Gastrocnemius medialis (tissue), 4 donors: ENCODE measurements at regions of chr17 and their contacts with region 1.

Region 1: GRCh38 chr17:39153599-39154051 is 2.2 kb upstream of the PLXDC1 start:
- DNase-seq: peak; percentile 81 to 87
- ATAC-seq: peak; percentile 83 to 85
- H3K4me3 ChIP-seq: peak overlapping the region; percentile 61 to 89 (median 86)
- H3K27ac ChIP-seq: peak overlapping the region; percentile 84 to 96 (median 92)
- H3K4me1 ChIP-seq: peaks cover 11 to 13% of the 10 kb centered on the region in 2 donors
- H3K27me3 ChIP-seq: peaks cover 5 to 18% (median 7%) of the 10 kb centered on the region in 3 donors
- CTCF ChIP-seq: peak in 2 of 5 experiments; percentile 25 to 32
- POLR2A ChIP-seq: peak; percentile 39 to 41

Region 2: DNA sequence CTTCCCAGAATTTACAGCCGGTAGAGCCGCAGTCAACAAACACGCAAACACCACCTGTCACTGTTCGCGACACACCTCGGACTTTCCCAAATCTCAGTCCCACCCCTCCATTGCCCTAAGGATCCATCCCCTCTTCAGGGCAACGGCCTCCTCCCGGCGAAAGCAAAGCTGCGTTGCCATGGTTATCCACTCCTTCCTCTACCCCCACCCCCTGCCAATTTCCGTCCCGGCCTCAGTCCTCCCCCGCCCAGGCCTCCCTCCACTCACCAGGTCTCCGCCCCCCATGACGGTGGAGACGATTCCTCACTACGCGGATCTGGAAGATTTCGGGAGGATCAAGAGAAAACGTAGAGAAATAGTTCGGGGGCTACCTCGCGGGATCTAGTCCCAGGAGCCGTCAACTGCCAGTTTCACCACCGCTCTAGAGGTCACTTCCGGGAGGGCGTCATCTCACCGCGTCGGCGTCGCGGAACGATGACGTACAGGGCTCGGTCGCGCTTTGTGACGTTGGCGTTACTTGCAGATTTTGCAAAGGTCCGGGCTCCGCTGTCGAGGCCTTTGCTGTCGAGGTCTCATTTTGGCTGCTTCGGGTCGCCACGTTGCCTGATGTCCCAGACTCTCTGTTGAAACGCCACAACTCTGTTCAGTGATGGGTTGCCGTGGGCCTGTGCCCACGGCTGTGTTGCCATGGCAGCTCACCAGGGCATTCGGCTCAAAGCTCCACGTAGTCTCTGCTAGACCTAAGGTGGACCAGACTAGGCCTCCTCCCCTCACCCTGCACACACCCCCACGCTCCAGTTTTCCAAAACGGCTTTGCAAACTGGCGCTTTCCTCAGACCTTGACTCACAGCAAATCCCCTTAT is 328.5 kb before region 1 on chr17 and contains the start of gene CWC25:
- in situ Hi-C with region 1: no loop called
- intact Hi-C with region 1: loop called (anchors 1 kb)
- DNase-seq: peak; percentile 79 to 96
- ATAC-seq: peak; percentile 96 to 97
- H3K4me3 ChIP-seq: peak within 1 kb of the TSS; percentile 69 to 100 (median 90)
- H3K27ac ChIP-seq: peak within 1 kb of the TSS; percentile 96 to 99 (median 98)
- H3K4me1 ChIP-seq: peaks cover 18 to 21% of the 10 kb centered on the region in 2 donors
- H3K27me3 ChIP-seq: no peaks in the 10 kb centered on the region
- CTCF ChIP-seq: no peak
- POLR2A ChIP-seq: peak; percentile 71 to 85
- total RNA-seq, gene CWC25: 9.1 to 14.4 (median 12.3) TPM

Region 3: GRCh38 chr17:39069114-39069756 is 84.4 kb before region 1 on chr17:
- in situ Hi-C with region 1: loop called in 1 of 4 experiments (anchors 10 kb)
- intact Hi-C with region 1: loop called (anchors 1 kb)
- DNase-seq: no peak
- ATAC-seq: peak in 1 of 2 donors; percentile 24
- H3K4me3 ChIP-seq: no peak overlapping the region
- H3K27ac ChIP-seq: no peak overlapping the region
- H3K4me1 ChIP-seq: no peaks in the 10 kb centered on the region
- H3K27me3 ChIP-seq: no peaks in the 10 kb centered on the region
- CTCF ChIP-seq: peak in 4 of 5 experiments; percentile 30 to 46 (median 42)
- POLR2A ChIP-seq: no peak

Region 4: GRCh38 chr17:39485555-39485954 is 331.9 kb after region 1 on chr17:
- in situ Hi-C with region 1: no loop called
- intact Hi-C with region 1: no loop called
- DNase-seq: peak; percentile 16 to 37
- ATAC-seq: peak; percentile 91 to 92
- H3K4me3 ChIP-seq: no peak overlapping the region
- H3K27ac ChIP-seq: peak overlapping the region in 2 of 4 donors; percentile 43 to 64
- H3K4me1 ChIP-seq: peaks cover 6 to 8% of the 10 kb centered on the region in 2 donors
- H3K27me3 ChIP-seq: no peaks in the 10 kb centered on the region
- CTCF ChIP-seq: no peak
- POLR2A ChIP-seq: no peak